Aorta (tissue), 5 donors: ENCODE measurements at regions of chr12 and their contacts with region 1.

Region 1: DNA sequence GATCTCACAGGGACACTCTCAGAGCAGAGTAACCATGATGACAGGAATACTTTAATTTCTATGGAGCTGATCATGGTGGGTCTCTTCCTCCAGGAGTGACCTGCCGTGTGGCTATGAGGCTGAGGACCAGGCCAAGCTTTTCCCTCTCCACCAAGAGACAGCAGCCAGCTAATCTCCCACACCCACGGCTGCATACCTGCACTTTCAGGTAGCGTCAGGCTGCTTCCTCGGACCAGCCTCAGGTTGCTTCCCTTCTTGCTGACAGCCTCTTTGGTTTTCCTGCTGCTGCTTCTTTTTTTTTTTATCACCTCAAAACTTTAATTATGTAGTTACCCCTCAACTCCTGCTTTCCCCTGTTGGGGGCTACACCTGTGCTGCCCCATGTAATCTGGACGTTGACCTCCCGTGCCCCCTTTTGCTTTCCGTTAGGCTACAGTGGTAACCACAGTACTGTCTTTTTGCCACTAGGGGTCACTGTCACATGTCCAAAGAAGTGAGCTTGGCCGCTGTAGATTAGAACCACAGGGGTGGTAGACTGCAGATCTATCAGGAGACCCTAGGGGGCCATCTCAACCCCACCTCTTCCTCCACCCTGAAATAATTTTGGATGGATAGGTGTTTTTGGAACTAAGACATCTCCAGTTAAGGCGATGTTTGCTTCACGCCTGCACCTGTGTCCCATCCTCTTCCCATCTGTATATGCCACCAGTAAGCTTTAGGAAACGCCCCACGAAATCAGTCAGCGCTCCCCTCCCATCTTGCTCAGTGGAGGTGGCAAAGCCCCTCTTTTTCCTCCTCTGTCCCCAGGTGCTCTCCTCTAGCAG is 7.8 kb upstream of the PIP4K2C start:
- DNase-seq: no peak
- ATAC-seq: peak; percentile 93
- H3K4me3 ChIP-seq: no peak overlapping the region
- H3K27ac ChIP-seq: no peak overlapping the region
- H3K4me1 ChIP-seq: no peaks in the 10 kb centered on the region
- H3K27me3 ChIP-seq: no peaks in the 10 kb centered on the region

Region 2: DNA sequence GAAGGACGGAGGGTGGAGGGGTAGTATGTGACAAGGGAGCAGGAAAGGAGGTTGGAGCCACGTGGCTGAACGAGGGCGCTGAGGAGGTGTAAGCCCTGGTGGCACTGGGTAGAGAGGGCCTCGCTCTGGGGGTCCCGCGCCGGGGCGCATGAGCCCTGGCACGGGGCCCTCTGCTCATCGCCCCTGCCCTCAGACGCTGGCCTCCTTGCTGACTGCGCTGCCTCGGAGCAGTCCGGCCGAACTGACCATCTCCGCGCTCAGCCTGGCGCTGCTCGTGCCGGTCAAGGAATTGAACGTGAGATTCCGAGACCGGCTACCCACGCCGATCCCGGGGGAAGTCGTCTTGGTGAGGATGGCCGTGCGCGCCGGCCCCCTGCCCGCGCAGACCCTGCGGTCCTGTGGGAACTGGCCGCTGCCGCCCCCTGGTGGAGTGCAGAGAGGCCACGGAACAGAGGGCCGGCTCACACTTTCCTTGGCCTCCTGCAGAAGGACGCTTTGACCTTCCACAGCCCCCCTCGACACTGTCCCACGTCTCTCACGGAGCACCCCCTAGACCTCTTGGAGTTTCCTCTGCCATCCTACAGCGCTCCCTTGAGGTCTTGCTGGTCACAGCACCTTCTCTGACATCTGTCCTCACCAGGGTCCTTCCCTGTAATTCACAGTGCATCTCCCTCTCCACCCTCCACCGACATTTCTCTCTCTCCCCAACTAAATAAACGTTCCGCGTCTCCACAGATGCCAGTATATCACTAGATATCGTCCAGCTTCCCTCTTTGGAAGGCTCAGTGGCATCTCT is 38.5 kb after region 1 on chr12:
- intact Hi-C with region 1: loop called (anchors 1 to 2 kb)
- DNase-seq: peak; percentile 71 to 92
- ATAC-seq: peak; percentile 80
- H3K4me3 ChIP-seq: peak overlapping the region in 1 of 2 donors; percentile 14
- H3K27ac ChIP-seq: no peak overlapping the region
- H3K4me1 ChIP-seq: no peaks in the 10 kb centered on the region
- H3K27me3 ChIP-seq: no peaks in the 10 kb centered on the region

Region 3: GRCh38 chr12:57693659-57694458 is 110.6 kb after region 1 on chr12 and contains the start of gene OS9:
- intact Hi-C with region 1: loop called in 1 of 2 experiments (anchors 5 kb)
- DNase-seq: peak; percentile 95 to 98
- ATAC-seq: peak; percentile 98
- H3K4me3 ChIP-seq: peak within 1 kb of the TSS; percentile 47 to 80
- H3K27ac ChIP-seq: peak within 1 kb of the TSS in 1 of 2 donors; percentile 35
- H3K4me1 ChIP-seq: peaks cover 4% of the 10 kb centered on the region in 2 donors
- H3K27me3 ChIP-seq: no peaks in the 10 kb centered on the region
- total RNA-seq, gene OS9: 208 to 252 TPM